MCF 10A (cell line): ENCODE measurements at regions of chr2 and their contacts with region 1.

Region 1: GRCh38 chr2:88187038-88187676 is 17.0 kb downstream of the THNSL2 start:
- DNase-seq: peak; percentile 80
- H3K4me3 Mint-ChIP-seq: no peak overlapping the region
- H3K27ac Mint-ChIP-seq: no peak overlapping the region
- H3K4me1 Mint-ChIP-seq: peaks cover 8% of the 10 kb centered on the region
- H3K27me3 Mint-ChIP-seq: no peaks in the 10 kb centered on the region
- CTCF ChIP-seq: peak; percentile 74

Region 2: DNA sequence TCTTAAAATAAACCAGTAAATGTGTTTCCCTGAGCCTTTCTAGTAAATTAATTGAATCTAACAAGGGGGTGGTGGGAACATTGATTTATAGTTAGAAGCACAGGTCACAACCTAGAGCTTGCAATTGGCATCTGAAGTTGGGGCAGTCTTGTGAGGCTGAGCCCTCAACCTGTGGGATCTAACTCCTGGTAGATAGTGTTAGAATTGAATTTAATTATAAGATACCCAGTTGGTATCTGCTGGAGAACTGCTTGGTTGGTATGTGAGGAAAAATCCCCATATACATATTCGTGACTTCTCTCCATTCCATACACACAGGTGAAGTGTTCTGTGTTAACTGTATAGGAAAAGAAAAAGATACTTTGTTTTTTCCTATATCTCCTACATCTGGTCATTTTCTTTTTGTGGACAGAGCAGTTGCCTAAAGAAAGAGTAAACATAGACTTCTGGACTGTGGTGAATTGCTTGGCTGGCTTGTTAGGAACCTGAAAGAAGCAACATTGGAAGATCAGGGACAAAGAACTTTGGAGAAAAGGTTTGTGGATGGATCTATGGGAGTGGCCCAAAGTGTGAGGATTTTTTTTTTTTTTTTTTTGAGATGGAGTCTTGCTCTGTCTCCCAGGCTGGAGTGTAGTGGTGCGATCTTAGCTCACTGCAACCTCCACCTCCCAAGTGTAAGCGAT is 19.6 kb after region 1 on chr2:
- CTCF ChIA-PET with region 1: interaction called, 13 read pairs
- POLR2A ChIA-PET with region 1: no interaction called
- intact Hi-C with region 1: no loop called
- DNase-seq: no peak
- H3K4me3 Mint-ChIP-seq: no peak overlapping the region
- H3K27ac Mint-ChIP-seq: no peak overlapping the region
- H3K4me1 Mint-ChIP-seq: no peaks in the 10 kb centered on the region
- H3K27me3 Mint-ChIP-seq: peaks cover 5% of the 10 kb centered on the region
- CTCF ChIP-seq: no peak

Region 3: GRCh38 chr2:88307817-88308216 is 120.7 kb after region 1 on chr2:
- CTCF ChIA-PET with region 1: interaction called, 11 read pairs
- POLR2A ChIA-PET with region 1: no interaction called
- intact Hi-C with region 1: loop called (anchors 1 kb)
- DNase-seq: peak; percentile 52
- H3K4me3 Mint-ChIP-seq: no peak overlapping the region
- H3K27ac Mint-ChIP-seq: no peak overlapping the region
- H3K4me1 Mint-ChIP-seq: no peaks in the 10 kb centered on the region
- H3K27me3 Mint-ChIP-seq: no peaks in the 10 kb centered on the region
- CTCF ChIP-seq: peak; percentile 33

Region 4: DNA sequence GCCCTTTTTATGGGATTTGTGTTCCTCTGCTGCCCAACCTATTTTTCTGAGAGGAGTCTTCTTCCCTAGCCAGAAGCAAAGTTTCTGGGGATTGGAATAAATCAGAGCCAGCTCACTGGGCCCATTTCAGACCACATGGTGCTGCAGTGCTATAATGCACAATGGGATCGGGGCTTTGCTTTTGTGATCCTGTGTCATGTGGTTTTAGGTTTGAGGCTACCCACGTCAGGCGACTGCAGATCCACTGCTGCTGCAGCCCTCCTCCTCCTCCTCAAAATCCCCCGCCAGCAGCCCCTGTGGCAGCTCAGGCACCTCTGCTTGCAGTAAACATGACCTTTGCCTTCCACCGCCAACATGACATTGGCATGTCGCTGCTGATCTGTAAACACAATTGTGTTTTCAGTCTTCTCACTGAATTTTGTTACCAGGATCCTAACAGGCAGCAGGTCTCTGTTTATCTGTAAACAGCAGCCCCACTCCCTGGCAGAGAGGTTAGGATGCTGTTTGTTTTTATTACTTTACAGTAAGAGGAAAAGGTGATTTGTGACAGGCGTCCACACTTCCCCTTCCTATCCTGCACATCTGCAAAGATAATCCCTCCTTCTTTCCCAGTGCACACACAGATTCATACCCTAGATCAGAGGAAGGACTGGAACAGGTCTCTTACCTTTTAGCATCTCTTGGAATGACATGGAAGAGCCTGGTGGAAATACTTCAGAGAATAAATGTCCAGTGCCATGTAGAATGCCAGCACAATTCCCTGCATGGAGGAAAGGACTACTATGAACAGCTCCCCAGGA is 134.5 kb after region 1 on chr2:
- CTCF ChIA-PET with region 1: no interaction called
- POLR2A ChIA-PET with region 1: no interaction called
- intact Hi-C with region 1: no loop called
- DNase-seq: no peak
- H3K4me3 Mint-ChIP-seq: no peak overlapping the region
- H3K27ac Mint-ChIP-seq: no peak overlapping the region
- H3K4me1 Mint-ChIP-seq: no peaks in the 10 kb centered on the region
- H3K27me3 Mint-ChIP-seq: no peaks in the 10 kb centered on the region
- CTCF ChIP-seq: no peak

Region 5: GRCh38 chr2:88451811-88452565 is 264.8 kb after region 1 on chr2:
- CTCF ChIA-PET with region 1: interaction called, 84 read pairs
- POLR2A ChIA-PET with region 1: interaction called, 9 read pairs
- intact Hi-C with region 1: loop called (anchors 1 kb)
- DNase-seq: no peak
- H3K4me3 Mint-ChIP-seq: peak overlapping the region; percentile 58
- H3K27ac Mint-ChIP-seq: no peak overlapping the region
- H3K4me1 Mint-ChIP-seq: no peaks in the 10 kb centered on the region
- H3K27me3 Mint-ChIP-seq: peaks cover 59% of the 10 kb centered on the region
- CTCF ChIP-seq: no peak

Region 6: GRCh38 chr2:88554189-88554588 is 367.0 kb after region 1 on chr2:
- CTCF ChIA-PET with region 1: interaction called, 35 read pairs
- POLR2A ChIA-PET with region 1: no interaction called
- intact Hi-C with region 1: loop called (anchors 1 kb)
- DNase-seq: peak; percentile 27
- H3K4me3 Mint-ChIP-seq: no peak overlapping the region
- H3K27ac Mint-ChIP-seq: no peak overlapping the region
- H3K4me1 Mint-ChIP-seq: no peaks in the 10 kb centered on the region
- H3K27me3 Mint-ChIP-seq: no peaks in the 10 kb centered on the region
- CTCF ChIP-seq: peak; percentile 38